Left cardiac atrium (tissue), 4 donors: ENCODE measurements at regions of chr3 and their contacts with region 1.

Region 1: DNA sequence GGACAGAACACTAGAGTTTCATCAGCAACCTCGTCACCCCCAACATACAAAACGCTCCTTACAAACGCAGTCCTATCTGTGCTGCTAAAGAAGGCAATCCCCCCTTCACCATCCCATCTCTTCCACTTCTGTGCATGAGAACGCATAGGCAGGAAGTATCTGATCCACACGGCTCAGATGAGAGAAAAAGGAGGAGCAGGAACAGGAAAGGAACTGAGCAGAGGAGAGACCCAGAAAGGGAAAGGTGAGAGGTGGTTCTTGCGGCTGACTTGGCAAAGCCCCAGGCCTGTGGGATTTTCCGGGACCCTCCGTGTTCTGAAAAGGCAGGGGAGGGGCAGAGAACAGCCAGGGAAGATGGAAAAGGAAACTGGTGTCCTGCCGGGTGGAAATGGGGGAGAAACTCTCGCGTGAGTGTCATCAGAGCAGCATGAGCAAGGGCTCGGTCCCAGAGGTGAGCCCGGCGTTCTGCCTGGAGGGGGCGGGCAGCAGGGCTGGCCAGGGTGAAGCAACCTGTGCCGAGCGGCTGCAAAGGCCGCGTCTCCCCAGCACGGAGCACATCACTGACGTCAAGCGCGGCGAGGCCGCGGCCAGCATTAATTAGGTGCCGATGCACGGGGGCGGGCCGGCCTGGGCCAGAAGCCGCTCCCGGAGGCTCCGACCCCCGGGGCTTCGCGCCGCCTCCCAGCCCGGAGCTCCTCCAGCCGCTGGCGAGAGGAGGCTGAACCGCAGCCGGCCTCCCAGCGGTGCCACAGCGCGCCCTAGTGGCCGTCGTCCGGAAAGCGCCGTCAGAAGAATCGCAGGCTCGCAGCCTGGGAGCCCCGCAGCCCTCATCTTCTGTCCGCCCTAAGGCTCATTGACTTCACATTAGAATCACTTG is 35.8 kb downstream of the CPN2 start:
- DNase-seq: peak; percentile 91
- ATAC-seq: peak; percentile 85 to 93

Region 2: DNA sequence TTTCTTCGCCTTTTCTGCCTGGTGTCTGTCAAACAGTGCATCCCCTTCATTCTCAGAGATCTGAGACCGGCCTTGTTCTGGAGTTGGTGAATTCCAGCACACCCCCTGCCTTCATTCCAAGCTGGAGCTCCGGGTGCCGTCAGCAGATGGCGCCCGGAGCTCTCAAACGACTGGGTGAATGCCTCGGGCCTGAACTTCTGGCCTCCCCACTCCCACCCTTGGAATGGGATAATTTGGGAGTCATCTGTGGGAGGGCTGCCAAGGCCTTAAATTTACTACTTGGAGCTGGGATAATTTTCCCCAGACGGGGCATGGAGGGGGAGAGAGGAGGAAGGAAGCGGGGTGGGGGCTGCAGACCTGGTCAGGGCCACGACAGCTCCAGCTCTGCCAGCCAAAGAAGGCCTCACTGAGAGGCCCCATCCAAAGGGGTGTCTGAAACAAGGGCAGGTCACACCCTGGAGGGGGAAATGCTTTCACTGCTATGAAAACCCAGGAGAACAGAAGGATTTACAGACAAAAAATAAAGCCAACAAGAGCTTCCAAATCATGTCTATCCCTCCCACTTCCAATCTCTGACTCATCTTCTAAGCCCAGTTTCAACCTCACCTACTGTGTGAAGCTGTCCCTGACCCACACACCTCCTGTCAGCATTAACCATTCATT is 534.4 kb before region 1 on chr3:
- intact Hi-C with region 1: loop called (anchors 1 to 5 kb)
- DNase-seq: peak; percentile 82
- ATAC-seq: peak; percentile 94 to 96

Region 3: DNA sequence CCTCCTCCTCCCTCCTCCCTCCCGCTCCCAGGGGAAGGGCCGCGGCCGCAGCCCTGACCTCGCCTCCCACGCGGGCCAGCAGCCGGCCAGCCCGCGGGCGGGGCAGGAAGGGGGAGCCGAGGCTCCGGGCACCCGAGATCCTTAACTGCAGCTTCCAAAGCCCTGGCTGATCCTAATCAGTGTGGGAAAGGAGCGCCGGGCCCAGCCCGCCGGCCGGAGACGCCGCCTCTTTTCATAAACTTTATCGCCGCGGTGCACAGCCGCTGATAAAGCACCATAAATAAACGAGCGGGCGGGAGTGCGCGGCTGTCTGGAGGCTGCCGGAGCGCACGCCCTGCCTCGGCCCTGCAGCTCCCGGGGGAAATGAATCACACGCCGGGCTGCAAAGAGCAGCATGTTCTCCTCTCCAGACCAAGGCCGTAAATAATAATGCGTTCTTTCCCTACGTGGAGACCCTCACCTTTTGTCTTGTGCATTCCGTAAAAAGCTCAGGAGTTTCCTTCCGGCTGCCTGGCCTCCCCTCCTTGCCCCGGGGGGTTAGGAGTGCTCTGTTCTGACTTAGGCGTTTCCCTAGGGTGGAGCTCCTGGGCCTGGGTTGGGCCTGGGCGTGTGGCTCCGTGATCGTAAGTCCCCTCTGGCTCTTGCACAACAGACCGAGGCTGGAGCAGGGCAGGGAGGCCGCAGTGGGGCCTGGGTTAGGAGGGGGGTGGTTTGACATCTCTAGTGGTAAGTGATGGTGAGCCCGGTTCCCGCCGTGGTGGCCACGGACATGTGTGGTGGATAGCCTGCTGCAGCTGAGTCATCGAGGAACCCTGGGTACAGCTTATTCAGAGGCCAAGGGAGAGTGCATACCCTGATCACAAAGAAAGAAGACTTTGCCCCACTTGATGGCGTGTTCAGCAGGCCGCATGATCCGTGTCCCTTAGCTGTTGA is 311.9 kb before region 1 on chr3:
- intact Hi-C with region 1: loop called in 1 of 2 experiments (anchors 5 kb)
- DNase-seq: peak; percentile 93
- ATAC-seq: peak; percentile 91 to 94

Region 4: DNA sequence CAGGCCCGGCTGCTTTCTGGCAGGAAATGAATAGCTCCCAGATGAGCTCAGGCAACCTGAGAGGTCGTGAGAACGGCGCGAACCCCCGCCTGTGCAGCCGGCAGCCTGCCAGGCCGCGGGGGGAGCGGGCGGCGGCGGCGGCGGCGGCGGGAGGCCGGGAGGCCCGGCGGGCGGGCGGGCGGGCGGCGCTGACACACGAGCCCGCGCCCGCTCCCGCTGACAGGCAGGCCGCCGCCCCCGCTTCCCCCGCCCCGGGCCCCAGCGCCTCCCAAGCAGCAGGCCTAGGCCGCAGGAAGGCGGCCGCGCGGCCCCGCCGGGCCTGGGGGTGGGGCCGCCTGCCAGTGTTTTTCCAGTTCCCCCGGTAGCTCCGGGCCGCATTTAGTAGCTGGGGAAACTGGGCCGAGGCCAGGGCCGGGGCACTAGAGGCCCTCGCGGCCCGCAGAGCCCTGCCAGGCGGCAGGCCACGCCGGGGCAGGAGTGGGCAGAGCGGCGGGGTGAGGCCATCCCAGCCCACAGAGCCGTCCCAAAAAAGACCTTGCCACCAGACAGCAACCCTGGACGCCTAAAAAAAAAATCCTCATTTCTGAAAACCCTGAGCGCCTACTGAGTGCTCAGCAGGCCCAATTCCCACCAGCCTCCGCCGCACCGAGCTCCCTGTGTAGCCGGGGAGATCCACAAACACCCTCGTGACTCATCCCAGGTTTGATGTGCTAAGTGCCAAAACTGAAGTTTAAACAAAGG is 173.7 kb before region 1 on chr3:
- intact Hi-C with region 1: loop called (anchors 2 to 5 kb)
- DNase-seq: peak; percentile 94
- ATAC-seq: peak; percentile 75 to 80

Region 5: GRCh38 chr3:194166682-194167479 is 148.4 kb before region 1 on chr3:
- intact Hi-C with region 1: loop called in 1 of 2 experiments (anchors 10 kb)
- DNase-seq: peak; percentile 70
- ATAC-seq: peak; percentile 64 to 79

Region 6: GRCh38 chr3:194189243-194189791 is 126.0 kb before region 1 on chr3:
- intact Hi-C with region 1: loop called in 1 of 2 experiments (anchors 10 kb)
- DNase-seq: peak; percentile 48
- ATAC-seq: peak; percentile 64 to 74

Region 7: GRCh38 chr3:194472290-194472920 is 157.1 kb after region 1 on chr3:
- intact Hi-C with region 1: no loop called
- DNase-seq: no peak
- ATAC-seq: peak; percentile 60 to 66